Ovary (tissue), 10 donors: ENCODE measurements at regions of chr19 and their contacts with region 1.

Region 1: GRCh38 chr19:17470068-17470841 is at the start of gene SLC27A1:
- DNase-seq: peak; percentile 99
- H3K4me3 ChIP-seq: peak within 1 kb of the TSS; percentile 90
- H3K27ac ChIP-seq: peak within 1 kb of the TSS; percentile 83 to 86
- H3K4me1 ChIP-seq: peaks cover 14% of the 10 kb centered on the region
- H3K27me3 ChIP-seq: no peaks in the 10 kb centered on the region
- CTCF ChIP-seq: no peak
- EP300 ChIP-seq: no peak
- POLR2A ChIP-seq: peak; percentile 44
- total RNA-seq, gene SLC27A1: 27.3 to 43.1 (median 37.8) TPM

Region 2: GRCh38 chr19:17346109-17346671 is 124.1 kb before region 1 on chr19:
- intact Hi-C with region 1: loop called in 3 of 4 experiments (anchors 5 to 10 kb)
- DNase-seq: peak; percentile 63 to 87 (median 83)
- H3K4me3 ChIP-seq: no peak overlapping the region
- H3K27ac ChIP-seq: no peak overlapping the region
- H3K4me1 ChIP-seq: no peaks in the 10 kb centered on the region
- H3K27me3 ChIP-seq: no peaks in the 10 kb centered on the region
- CTCF ChIP-seq: peak; percentile 93 to 96 (median 95)
- EP300 ChIP-seq: no peak
- POLR2A ChIP-seq: no peak

Region 3: GRCh38 chr19:17390665-17391370 is 79.4 kb before region 1 on chr19:
- intact Hi-C with region 1: loop called in 3 of 4 experiments (anchors 5 to 10 kb)
- DNase-seq: peak; percentile 91 to 95 (median 93)
- H3K4me3 ChIP-seq: peak overlapping the region; percentile 54
- H3K27ac ChIP-seq: no peak overlapping the region
- H3K4me1 ChIP-seq: peaks cover 11% of the 10 kb centered on the region
- H3K27me3 ChIP-seq: no peaks in the 10 kb centered on the region
- CTCF ChIP-seq: peak; percentile 82 to 94 (median 87)
- EP300 ChIP-seq: no peak
- POLR2A ChIP-seq: peak; percentile 16

Region 4: GRCh38 chr19:17419621-17420466 is 50.4 kb before region 1 on chr19 and contains the start of gene MVB12A:
- intact Hi-C with region 1: loop called in 1 of 4 experiments (anchors 5 kb)
- DNase-seq: peak; percentile 97 to 98 (median 97)
- H3K4me3 ChIP-seq: peak within 1 kb of the TSS; percentile 75
- H3K27ac ChIP-seq: peak within 1 kb of the TSS; percentile 31 to 77
- H3K4me1 ChIP-seq: peaks cover 3% of the 10 kb centered on the region
- H3K27me3 ChIP-seq: no peaks in the 10 kb centered on the region
- CTCF ChIP-seq: no peak
- EP300 ChIP-seq: peak; percentile 80
- POLR2A ChIP-seq: peak; percentile 35
- total RNA-seq, gene MVB12A: 54.4 to 90.4 (median 81.4) TPM

Region 5: DNA sequence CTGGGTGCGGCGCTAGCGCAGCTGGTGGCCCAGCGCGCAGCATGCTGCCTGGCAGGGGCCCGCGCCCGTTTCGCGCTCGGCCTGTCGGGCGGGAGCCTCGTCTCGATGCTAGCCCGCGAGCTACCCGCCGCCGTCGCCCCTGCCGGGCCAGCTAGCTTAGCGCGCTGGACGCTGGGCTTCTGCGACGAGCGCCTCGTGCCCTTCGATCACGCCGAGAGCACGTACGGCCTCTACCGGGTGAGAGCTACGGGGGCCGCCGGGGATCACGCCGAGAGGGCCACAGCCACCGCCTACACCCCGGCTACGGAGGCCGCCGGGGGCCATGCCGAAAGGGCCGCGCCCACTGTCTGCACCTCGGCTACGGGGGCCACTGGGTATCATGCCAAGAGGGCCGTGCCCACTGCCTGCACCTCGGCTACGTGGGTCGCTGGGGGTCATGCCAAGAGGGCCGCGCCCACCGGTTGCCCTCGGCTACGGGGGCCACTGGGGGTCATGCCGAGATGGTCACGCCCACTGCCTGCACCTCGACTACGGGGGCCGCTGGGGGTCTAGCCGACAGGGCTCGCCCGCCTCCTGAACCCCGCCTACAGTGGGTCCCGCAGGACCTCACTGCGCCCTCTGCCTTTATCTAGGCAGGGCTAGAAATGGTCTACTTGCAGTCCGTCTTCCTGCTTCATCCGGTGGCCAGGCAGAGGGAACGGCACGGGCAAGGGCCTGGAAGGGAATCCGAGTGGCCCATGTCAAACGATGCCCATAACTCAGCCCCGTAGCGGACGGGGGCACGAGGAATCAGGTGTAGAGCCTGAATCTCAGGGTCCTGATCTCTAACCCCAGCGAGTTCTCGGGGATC is 41.7 kb after region 1 on chr19:
- intact Hi-C with region 1: loop called in 2 of 4 experiments (anchors 5 kb)
- DNase-seq: peak; percentile 84 to 92 (median 91)
- H3K4me3 ChIP-seq: peak overlapping the region; percentile 70
- H3K27ac ChIP-seq: peak overlapping the region; percentile 95 to 98
- H3K4me1 ChIP-seq: peaks cover 2% of the 10 kb centered on the region
- H3K27me3 ChIP-seq: no peaks in the 10 kb centered on the region
- CTCF ChIP-seq: peak; percentile 24 to 41 (median 31)
- EP300 ChIP-seq: no peak
- POLR2A ChIP-seq: peak; percentile 66